ENCODE measurements at regions of chrX and their contacts with region 1.

Region 1: DNA sequence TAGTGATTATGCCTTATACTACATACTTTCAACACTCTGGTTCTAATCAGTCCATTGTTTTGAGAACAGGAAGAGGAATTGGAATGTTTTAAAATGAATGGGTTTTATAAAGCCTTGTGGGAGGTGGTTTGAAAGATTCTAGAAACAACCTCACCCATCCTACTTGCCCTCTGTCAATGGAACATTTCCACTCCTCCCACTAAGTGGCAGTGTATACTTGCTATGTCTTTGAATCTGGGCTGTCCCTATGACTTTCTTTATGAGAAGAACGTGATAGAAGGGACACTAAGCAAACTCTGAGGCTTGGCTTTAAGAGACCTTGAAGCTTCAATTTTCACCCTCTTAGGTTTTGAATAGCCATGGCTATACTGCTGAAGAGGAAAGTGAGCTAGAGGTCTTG is 611.2 kb downstream of the PPP4R3C start:
- DNase-seq: no peak
- ATAC-seq: peak in 1 of 2 donors; percentile 63
- H3K4me3 ChIP-seq: no peak overlapping the region
- H3K27ac ChIP-seq: no peak overlapping the region
- H3K4me1 ChIP-seq: no peaks in the 10 kb centered on the region
- H3K27me3 ChIP-seq: no peaks in the 10 kb centered on the region

Region 2: GRCh38 chrX:27186664-27187063 is 334.7 kb after region 1 on chrX:
- intact Hi-C with region 1: loop called in 1 of 4 experiments (anchors 10 kb)
- DNase-seq: peak in 1 of 3 donors; percentile 18
- ATAC-seq: no peak
- H3K4me3 ChIP-seq: no peak overlapping the region
- H3K27ac ChIP-seq: no peak overlapping the region
- H3K4me1 ChIP-seq: no peaks in the 10 kb centered on the region
- H3K27me3 ChIP-seq: no peaks in the 10 kb centered on the region